PC-9 (cell line): ENCODE measurements at regions of chr10 and their contacts with region 1.

Region 1: GRCh38 chr10:80144067-80144695 is 11.7 kb downstream of the PLAC9 start:
- DNase-seq: peak; percentile 58 to 77
- H3K4me3 ChIP-seq: peak overlapping the region; percentile 48
- H3K27ac ChIP-seq: no peak overlapping the region
- H3K4me1 ChIP-seq: peaks cover 23% of the 10 kb centered on the region
- H3K27me3 ChIP-seq: no peaks in the 10 kb centered on the region
- CTCF ChIP-seq: no peak; the same call in 1 of the 2 replicates

Region 2: GRCh38 chr10:79542626-79543025 is 601.6 kb before region 1 on chr10:
- CTCF ChIA-PET with region 1: interaction called, 12 read pairs
- POLR2A ChIA-PET with region 1: no interaction called
- intact Hi-C with region 1: loop called (anchors 2 kb)
- DNase-seq: no peak
- H3K4me3 ChIP-seq: no peak overlapping the region
- H3K27ac ChIP-seq: no peak overlapping the region
- H3K4me1 ChIP-seq: no peaks in the 10 kb centered on the region
- H3K27me3 ChIP-seq: peaks cover 25% of the 10 kb centered on the region
- CTCF ChIP-seq: no peak

Region 3: GRCh38 chr10:80078448-80079311 is 65.5 kb before region 1 on chr10 and contains the start of gene TMEM254:
- CTCF ChIA-PET with region 1: no interaction called
- POLR2A ChIA-PET with region 1: interaction called, 3 read pairs
- intact Hi-C with region 1: loop called (anchors 2 kb)
- DNase-seq: peak; percentile 92 to 95
- H3K4me3 ChIP-seq: peak within 1 kb of the TSS; percentile 88
- H3K27ac ChIP-seq: peak within 1 kb of the TSS; percentile 78
- H3K4me1 ChIP-seq: peaks cover 41% of the 10 kb centered on the region
- H3K27me3 ChIP-seq: no peaks in the 10 kb centered on the region
- CTCF ChIP-seq: no peak
- total RNA-seq, gene TMEM254: 30.2 and 36.6 TPM in 2 replicates

Region 4: DNA sequence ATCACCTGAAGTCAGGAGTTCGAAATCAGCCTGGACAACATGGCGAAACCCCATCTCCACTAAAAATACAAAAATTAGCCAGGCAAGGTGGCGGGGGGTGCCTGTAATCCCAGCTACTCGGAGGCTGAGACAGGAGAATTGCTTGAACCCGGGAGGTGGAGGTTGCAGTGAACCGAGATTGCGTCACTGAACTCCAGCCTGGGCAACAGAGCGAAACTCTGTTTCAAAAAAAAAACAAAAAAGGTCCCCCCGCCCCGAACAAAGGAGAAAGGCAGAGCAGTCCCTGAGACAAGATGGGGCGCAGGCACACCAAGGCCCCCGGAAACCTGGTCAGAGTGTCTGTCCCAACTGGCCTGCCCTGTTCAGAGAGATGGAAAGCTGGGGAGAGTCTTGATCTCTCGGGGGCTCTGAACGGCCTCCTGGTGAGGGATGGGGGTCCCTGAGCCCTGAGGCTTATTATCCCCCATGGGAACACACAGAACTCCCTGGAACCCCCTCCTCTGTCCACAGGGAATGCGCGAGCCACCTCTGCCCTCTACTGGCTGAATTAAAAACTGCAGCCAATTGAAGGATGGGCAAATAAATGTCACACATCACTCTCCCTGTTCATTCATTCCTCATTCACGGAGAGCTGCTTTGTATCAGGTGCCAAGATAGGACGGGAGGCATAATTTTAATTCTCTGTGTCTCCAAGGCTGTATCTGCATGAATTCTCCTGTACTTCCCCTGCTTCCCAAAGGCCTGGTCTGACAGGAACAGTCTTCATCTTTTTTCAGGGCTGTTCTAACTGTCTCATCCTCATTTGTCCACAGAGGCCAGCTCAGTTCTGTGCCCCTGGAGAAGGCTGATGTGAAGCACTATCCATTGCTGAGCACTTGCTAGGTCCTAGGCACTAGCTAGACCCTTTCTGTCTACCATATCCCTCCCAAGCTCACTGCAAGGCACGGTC is 116.4 kb after region 1 on chr10:
- CTCF ChIA-PET with region 1: interaction called, 10 read pairs
- POLR2A ChIA-PET with region 1: no interaction called
- intact Hi-C with region 1: no loop called
- DNase-seq: peak in 1 of 2 experiments; percentile 45
- H3K4me3 ChIP-seq: no peak overlapping the region
- H3K27ac ChIP-seq: no peak overlapping the region
- H3K4me1 ChIP-seq: no peaks in the 10 kb centered on the region
- H3K27me3 ChIP-seq: no peaks in the 10 kb centered on the region; the same call in 1 of the 2 replicates
- CTCF ChIP-seq: peak; percentile 98

Region 5: DNA sequence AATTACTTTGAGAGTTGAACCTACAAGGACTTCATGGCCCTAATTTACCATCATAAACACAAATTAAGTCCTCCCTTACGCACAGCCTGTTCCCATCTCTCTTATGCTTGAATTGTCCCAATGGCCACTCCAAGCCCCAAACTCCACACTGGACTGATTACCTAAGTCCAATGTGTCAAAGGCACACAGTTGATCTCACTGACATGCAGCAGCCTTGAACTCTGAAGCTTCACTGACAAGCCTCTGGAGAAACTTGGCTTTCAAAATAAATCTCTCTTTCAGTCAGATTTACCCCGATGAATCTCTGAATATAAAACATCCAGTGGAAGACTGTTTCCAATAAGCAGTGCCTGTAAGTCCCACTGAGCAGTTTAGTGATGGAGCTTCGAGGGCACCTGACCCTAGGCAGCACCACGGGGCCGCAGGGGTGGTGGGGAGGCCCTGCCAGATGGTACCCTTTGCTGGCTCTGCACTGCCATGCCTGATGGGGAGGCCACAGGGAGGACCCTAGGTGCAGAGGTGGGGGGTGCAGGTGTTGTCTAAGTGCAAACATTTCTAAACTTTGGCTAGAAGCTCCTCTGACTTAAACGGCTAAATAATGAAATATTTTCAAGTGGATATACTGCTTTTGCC is 148.5 kb after region 1 on chr10:
- CTCF ChIA-PET with region 1: no interaction called
- POLR2A ChIA-PET with region 1: no interaction called
- intact Hi-C with region 1: no loop called
- DNase-seq: no peak
- H3K4me3 ChIP-seq: no peak overlapping the region
- H3K27ac ChIP-seq: no peak overlapping the region
- H3K4me1 ChIP-seq: no peaks in the 10 kb centered on the region; the same call in 1 of the 2 replicates
- H3K27me3 ChIP-seq: peaks cover 69% of the 10 kb centered on the region
- CTCF ChIP-seq: no peak